H1 (cell line): ENCODE measurements at regions of chr1 and their contacts with region 1.

Region 1: GRCh38 chr1:28369371-28370238 is at the start of gene PHACTR4:
- DNase-seq: peak; percentile 90 to 96
- H3K4me3 ChIP-seq: peak within 1 kb of the TSS; percentile 74 to 86 (median 79)
- H3K27ac ChIP-seq: peak within 1 kb of the TSS; percentile 82
- H3K4me1 ChIP-seq: no peaks in the 10 kb centered on the region; a peak in 1 of 7 replicates
- H3K27me3 ChIP-seq: no peaks in the 10 kb centered on the region
- CTCF ChIP-seq: no peak
- EP300 ChIP-seq: no peak
- POLR2A ChIP-seq: peak; percentile 84 to 93
- RAD21 ChIP-seq: no peak
- total RNA-seq, gene PHACTR4: 54.1 and 57.8 TPM in 2 replicates

Region 2: GRCh38 chr1:28354121-28354520 is 15.5 kb before region 1 on chr1:
- CTCF ChIA-PET with region 1: interaction called, 12 read pairs
- POLR2A ChIA-PET with region 1: interaction called, 5 read pairs
- DNase-seq: no peak
- H3K4me3 ChIP-seq: no peak overlapping the region
- H3K27ac ChIP-seq: no peak overlapping the region
- H3K4me1 ChIP-seq: peaks cover 0 to under 1% (median 0%) of the 10 kb centered on the region in 4 experiments; a peak in 1 of 7 replicates
- H3K27me3 ChIP-seq: no peaks in the 10 kb centered on the region
- CTCF ChIP-seq: no peak
- EP300 ChIP-seq: no peak
- POLR2A ChIP-seq: no peak
- RAD21 ChIP-seq: no peak